HepG2 (cell line): ENCODE measurements at regions of chr2 and their contacts with region 1.

Region 1: DNA sequence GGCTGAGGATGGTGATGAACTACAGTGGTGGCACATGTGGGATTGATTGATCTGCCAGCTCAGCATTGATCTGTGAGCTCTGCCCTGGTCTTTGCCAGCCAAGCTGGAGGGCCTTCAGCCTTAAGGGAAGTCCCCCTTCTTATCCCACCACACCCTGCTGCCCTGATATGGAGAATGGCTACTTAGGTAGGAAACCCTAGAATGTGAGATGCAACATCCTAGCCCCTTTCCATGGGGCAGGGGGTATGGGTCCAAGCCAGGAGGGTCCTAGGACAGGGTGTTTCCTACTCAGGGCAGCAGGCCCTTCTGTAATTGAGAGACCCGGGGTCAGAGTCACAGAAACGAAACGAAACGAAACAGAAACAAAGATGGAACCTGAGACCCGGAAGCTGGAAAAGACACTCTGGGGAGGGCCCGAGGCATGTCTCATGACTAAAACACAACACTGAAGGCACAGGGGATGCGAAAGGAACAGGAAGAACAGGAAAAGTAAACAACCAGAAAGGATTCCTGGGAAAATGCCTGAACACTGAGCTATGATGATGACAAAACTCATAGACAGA is 16.9 kb upstream of the SULT1C2 start:
- DNase-seq: peak; percentile 81
- ATAC-seq: peak; percentile 73
- H3K4me3 ChIP-seq: peak overlapping the region; percentile 45 to 65 (median 46)
- H3K27ac ChIP-seq: peak overlapping the region; percentile 8
- H3K4me1 ChIP-seq: peaks cover 58% of the 10 kb centered on the region
- H3K27me3 ChIP-seq: no peaks in the 10 kb centered on the region; a peak in 1 of 5 replicates
- CTCF ChIP-seq: no peak
- EP300 ChIP-seq: no peak; a peak in 1 of 4 replicates
- POLR2A ChIP-seq: no peak
- RAD21 ChIP-seq: no peak

Region 2: DNA sequence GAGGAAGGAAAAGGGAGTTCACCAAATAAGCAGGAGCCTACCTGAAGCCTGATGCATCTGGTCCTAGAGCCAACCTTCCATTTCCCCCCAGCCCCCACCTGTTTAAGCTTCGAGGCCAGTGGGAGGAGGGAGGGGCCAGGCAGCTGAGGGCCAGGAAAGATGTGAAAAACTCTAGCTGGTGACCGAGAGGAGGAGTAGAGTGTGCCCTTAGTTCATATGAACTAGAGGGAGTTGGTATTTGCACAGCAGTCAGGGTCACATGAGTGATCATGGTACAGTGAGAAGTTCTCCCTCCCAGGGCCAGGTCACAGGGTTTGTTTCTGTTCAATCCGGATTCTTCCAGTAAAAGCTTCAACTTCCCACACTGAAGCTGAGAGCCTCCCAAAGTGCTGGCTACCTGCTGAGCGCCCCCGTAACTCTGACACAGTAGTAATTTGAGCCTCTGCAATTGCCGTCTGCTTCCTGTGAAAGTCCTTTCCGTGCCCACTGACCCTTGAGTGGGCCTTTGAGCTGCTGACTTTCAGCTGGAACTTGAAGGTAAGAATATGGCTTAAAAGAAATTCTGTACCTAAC is 16.8 kb after region 1 on chr2 and contains the start of gene SULT1C2:
- CTCF ChIA-PET with region 1: no interaction called
- POLR2A ChIA-PET with region 1: interaction called, 22 read pairs
- in situ Hi-C with region 1: no loop called
- intact Hi-C with region 1: no loop called
- DNase-seq: peak; percentile 83
- ATAC-seq: peak; percentile 99
- H3K4me3 ChIP-seq: peak within 1 kb of the TSS; percentile 18 to 60 (median 51)
- H3K27ac ChIP-seq: peak within 1 kb of the TSS; percentile 68
- H3K4me1 ChIP-seq: peaks cover 25% of the 10 kb centered on the region
- H3K27me3 ChIP-seq: no peaks in the 10 kb centered on the region
- CTCF ChIP-seq: peak; percentile 28; the same call in 1 of the 2 replicates
- EP300 ChIP-seq: peak in 1 of 2 experiments; percentile 13; a peak in 1 of 4 replicates
- POLR2A ChIP-seq: peak; percentile 18 to 53; a peak in 1 of 4 replicates
- RAD21 ChIP-seq: no peak
- total RNA-seq, gene SULT1C2: 6.2 and 10.1 TPM in 2 replicates